Calu3 (cell line): ENCODE measurements at regions of chr18 and their contacts with region 1.

Region 1: GRCh38 chr18:43396266-43396665 is 119.0 kb upstream of the SYT4 start:
- DNase-seq: no peak
- H3K4me3 Mint-ChIP-seq: no peak overlapping the region
- H3K27ac Mint-ChIP-seq: no peak overlapping the region
- H3K4me1 Mint-ChIP-seq: no peaks in the 10 kb centered on the region
- H3K27me3 Mint-ChIP-seq: no peaks in the 10 kb centered on the region
- CTCF ChIP-seq: no peak

Region 2: DNA sequence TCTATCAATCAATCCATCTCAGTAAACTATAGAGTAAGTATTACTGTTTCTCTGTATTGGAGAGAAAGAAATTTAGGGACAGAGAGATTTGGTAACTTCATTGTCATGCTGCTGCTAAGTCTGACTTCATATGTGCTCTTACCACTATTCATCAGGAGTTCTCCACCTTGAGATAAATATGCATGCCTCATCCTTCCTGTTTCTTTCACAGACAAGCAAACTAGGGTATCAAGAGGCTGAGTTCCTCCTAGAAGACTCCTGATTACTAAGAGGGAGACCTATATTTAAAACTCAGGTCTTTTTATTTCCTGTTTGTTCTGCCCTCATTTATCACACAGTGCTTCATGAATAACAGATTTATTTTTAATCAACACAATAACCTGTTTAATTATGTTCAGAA is 314.9 kb before region 1 on chr18:
- CTCF ChIA-PET with region 1: no interaction called
- intact Hi-C with region 1: no loop called
- DNase-seq: no peak
- H3K4me3 Mint-ChIP-seq: no peak overlapping the region
- H3K27ac Mint-ChIP-seq: no peak overlapping the region
- H3K4me1 Mint-ChIP-seq: no peaks in the 10 kb centered on the region
- H3K27me3 Mint-ChIP-seq: no peaks in the 10 kb centered on the region
- CTCF ChIP-seq: no peak

Region 3: DNA sequence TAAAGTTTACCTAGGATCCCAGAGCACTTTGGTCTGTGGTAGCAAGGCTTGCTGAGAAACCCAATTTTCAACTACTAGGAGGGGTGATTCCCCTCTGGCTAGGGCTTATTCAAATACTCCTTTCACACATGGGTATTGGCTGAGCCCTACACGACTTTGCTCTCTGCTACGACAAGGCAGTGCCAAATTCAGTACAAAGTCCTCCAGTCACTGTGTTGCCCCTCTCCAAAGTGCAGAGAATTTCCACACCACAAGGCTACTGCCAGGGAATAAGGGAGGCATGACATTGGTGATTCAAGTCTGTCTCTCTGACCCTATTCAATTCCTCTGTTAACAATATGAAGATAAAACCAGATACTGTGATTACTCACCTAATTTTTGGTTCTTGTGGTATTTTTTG is 157.8 kb before region 1 on chr18:
- CTCF ChIA-PET with region 1: no interaction called
- intact Hi-C with region 1: no loop called
- DNase-seq: no peak
- H3K4me3 Mint-ChIP-seq: no peak overlapping the region
- H3K27ac Mint-ChIP-seq: no peak overlapping the region
- H3K4me1 Mint-ChIP-seq: no peaks in the 10 kb centered on the region
- H3K27me3 Mint-ChIP-seq: no peaks in the 10 kb centered on the region
- CTCF ChIP-seq: no peak

Region 4: GRCh38 chr18:43271593-43272432 is 124.5 kb before region 1 on chr18:
- CTCF ChIA-PET with region 1: no interaction called
- intact Hi-C with region 1: loop called (anchors 10 kb)
- DNase-seq: peak; percentile 46
- H3K4me3 Mint-ChIP-seq: no peak overlapping the region
- H3K27ac Mint-ChIP-seq: no peak overlapping the region
- H3K4me1 Mint-ChIP-seq: no peaks in the 10 kb centered on the region
- H3K27me3 Mint-ChIP-seq: peaks cover 13% of the 10 kb centered on the region
- CTCF ChIP-seq: peak; percentile 57

Region 5: GRCh38 chr18:43571078-43571689 is 174.9 kb after region 1 on chr18:
- CTCF ChIA-PET with region 1: no interaction called
- intact Hi-C with region 1: loop called (anchors 5 kb)
- DNase-seq: peak; percentile 42
- H3K4me3 Mint-ChIP-seq: no peak overlapping the region
- H3K27ac Mint-ChIP-seq: no peak overlapping the region
- H3K4me1 Mint-ChIP-seq: no peaks in the 10 kb centered on the region
- H3K27me3 Mint-ChIP-seq: peaks cover 28% of the 10 kb centered on the region
- CTCF ChIP-seq: peak; percentile 83